Psoas muscle (tissue), 8 donors: ENCODE measurements at regions of chr11 and their contacts with region 1.

Region 1: DNA sequence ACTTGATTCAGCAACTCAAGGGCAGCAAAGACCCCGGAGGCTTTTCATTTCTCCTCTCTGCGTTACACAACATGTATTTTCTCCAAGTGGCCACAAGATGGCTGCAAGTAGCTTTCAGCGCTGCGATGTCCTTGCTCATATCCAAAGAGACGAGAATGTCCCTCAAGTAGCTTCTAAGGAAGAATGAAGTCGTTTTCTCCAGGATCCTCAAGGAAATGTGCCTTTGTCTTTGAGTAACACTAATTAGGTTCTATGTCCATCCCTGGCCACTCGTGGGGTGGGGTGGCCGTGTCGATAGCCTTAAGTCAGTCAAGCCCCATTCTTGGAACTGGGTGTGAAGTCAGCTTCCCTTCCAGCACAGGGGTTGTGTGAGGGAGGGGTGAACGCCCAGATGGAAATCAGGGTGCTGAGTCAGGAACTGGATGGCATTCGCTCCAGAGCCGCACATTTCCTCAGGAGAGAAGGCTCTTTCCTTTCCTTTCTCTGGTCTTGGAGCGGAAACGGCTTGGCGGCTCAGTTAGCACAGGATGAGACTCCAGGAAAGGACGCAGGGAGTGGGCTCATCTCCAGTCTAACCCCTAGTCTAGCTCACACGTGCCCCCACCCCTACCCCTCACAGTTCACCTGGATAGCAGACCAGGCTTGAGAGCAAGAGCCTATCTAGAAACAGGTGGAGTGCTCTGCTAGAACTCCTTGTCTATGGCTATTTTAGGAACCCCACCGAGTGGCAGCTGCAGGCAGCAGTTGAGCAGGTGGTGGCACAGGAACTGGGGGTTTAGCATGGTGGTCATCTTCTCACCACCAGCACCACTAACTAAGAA is 44.3 kb downstream of the NNMT start:
- DNase-seq: peak; percentile 39 to 53
- ATAC-seq: peak; percentile 72 to 95 (median 82)
- H3K4me3 ChIP-seq: peak overlapping the region; percentile 52
- H3K27ac ChIP-seq: peak overlapping the region; percentile 27
- H3K4me1 ChIP-seq: peaks cover 8% of the 10 kb centered on the region
- H3K27me3 ChIP-seq: no peaks in the 10 kb centered on the region
- CTCF ChIP-seq: peak; percentile 80

Region 2: DNA sequence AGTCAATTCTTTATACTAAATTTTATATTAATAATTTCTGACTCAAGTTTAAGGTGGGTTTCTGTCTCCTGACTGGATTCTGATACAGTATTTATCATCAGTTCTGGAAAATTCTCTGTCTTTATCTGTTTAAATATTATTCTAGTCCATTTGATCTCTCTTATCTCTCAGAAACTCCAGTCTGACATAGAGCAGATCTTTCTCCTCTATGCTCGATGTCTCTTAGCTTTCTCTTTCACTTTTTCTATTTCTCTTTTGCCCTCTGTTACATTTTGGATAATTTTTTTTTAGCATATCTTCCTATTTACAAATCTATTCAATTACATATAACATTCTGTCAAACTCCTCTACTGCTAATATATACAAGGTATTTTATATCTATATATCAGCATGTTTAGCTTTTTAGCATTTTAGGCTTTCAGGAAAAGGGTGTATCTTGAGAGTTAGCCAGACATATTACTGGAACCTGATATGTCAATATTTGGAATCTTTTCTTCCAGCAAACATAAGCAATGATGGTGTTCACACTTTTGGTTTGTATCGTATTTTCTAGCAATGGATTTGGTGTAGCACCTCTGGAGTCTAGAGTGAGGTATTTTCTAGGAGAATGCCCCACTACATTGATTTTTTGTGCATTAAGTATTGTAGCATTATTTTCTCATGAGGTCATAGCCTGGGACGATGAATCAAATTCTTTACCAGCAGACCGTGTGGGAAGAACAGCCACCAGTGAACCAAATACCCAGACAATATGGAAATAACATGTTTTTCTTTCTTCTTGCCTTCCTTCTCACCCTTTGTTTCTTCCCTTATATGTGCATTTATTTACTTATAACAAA is 48.5 kb before region 1 on chr11:
- intact Hi-C with region 1: no loop called
- DNase-seq: no peak
- ATAC-seq: no peak
- H3K4me3 ChIP-seq: peak overlapping the region; percentile 56
- H3K27ac ChIP-seq: peak overlapping the region; percentile 80
- H3K4me1 ChIP-seq: peaks cover 35% of the 10 kb centered on the region
- H3K27me3 ChIP-seq: peaks cover 0 to 2% (median 0%) of the 10 kb centered on the region in 3 donors
- CTCF ChIP-seq: no peak

Region 3: DNA sequence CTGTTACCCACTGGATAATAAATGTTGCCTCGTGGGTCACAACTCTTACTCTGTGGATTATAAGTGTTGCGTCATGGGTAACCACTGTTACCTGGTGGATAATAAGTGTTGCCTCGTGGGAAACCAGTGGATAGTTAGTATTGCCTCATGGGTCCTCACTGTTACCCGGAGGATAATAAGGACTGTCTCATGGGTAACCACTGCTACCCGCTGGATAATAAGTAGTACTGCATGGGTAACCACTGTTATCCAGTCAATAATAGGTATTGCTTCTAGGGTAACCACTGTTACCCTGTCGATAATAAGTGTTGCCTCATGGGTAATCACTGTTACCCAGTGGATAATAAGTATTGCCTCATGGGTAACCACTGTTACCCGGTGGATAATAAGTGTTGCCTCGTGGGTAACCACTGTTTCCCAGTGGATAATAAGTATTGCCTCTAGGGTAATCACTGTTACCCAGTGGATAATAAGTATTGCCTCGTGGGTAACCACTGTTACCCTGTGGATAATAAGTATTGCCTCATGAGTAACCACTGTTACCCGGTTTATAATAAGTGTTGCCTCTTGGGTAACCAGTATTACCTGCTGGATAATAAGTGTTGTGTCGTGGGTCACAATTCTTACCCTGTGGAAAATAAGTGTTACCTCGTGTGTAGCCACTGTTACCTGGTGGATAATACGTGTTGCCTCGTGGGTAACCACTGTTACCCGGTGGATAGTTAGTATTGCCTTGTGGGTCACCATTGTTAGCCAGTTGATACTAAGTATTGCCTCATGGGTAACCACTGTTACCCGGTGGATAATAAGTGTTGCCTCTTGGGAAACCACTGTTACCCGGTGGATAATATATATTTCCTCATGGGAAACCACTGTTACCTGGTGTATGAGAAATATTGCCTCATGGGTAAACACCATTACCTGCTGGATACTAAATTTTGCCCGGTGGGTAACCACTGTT is 270.7 kb after region 1 on chr11:
- intact Hi-C with region 1: loop called in 1 of 2 experiments (anchors 10 kb)
- DNase-seq: no peak
- ATAC-seq: no peak
- H3K4me3 ChIP-seq: no peak overlapping the region
- H3K27ac ChIP-seq: no peak overlapping the region
- H3K4me1 ChIP-seq: no peaks in the 10 kb centered on the region
- H3K27me3 ChIP-seq: no peaks in the 10 kb centered on the region
- CTCF ChIP-seq: no peak